ENCODE measurements at regions of chr10 and their contacts with region 1.

Region 1: GRCh38 chr10:59606551-59606961 is 103.1 kb downstream of the SLC16A9 start:
- DNase-seq: no peak
- CTCF ChIP-seq: no peak

Region 2: GRCh38 chr10:58781873-58782488 is 824.6 kb before region 1 on chr10:
- in situ Hi-C with region 1: loop called (anchors 25 kb)
- DNase-seq: peak; percentile 26
- CTCF ChIP-seq: peak; percentile 69

Region 3: DNA sequence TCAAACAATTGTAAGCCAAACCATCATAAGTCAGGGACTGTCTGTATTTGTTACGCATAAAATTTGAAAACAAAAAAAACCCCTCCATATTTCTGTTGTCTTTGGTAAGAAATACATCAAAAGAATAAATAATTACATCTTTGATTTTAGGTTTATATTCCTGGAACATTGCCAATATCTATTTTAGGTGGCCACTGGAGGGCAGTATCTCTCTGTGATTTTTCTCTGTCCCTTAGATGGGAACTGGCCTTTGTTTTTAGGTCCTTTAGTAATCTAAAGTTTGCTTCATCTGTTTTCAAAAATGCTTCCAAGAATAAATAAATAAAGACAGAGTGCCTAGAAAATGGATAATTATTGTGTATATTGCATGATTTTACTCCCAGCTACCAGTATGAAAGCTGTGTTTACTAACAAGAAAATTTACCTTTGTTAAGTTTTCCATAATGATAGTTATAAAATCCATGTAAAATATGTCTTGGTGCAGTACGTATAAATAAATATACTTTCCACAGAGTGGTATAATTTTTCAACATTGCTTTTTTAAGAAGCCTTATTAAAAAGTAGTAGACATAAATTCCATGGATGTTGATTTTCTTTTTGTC is 365.9 kb before region 1 on chr10:
- in situ Hi-C with region 1: loop called (anchors 25 kb)
- DNase-seq: peak; percentile 9
- CTCF ChIP-seq: peak; percentile 49

Measured in GM13977 (cell line).